Activated T-helper 2 cell treated with anti-CD3 and anti-CD28 coated beads, Interferon-gamma antibody, Interleukin-2, Interleukin-4, amounts not matched to agents 10 μg/mL and 5 μg/mL and 100 μg/mL, durations not matched to agents 14 hours and 24 hours and 36 hours (primary cell): ENCODE measurements at regions of chr3 and their contacts with region 1.

Region 1: GRCh38 chr3:72134989-72135451 is 350.1 kb upstream of the PROK2 start:
- DNase-seq: no peak
- H3K4me3 Mint-ChIP-seq: peak overlapping the region; percentile 31
- H3K27ac Mint-ChIP-seq: peak overlapping the region; percentile 77
- H3K4me1 Mint-ChIP-seq: peaks cover 29% of the 10 kb centered on the region
- H3K27me3 Mint-ChIP-seq: no peaks in the 10 kb centered on the region

Region 2: GRCh38 chr3:72100601-72101187 is 34.3 kb before region 1 on chr3:
- intact Hi-C with region 1: loop called (anchors 5 kb)
- DNase-seq: peak; percentile 87
- H3K4me3 Mint-ChIP-seq: peak overlapping the region; percentile 76
- H3K27ac Mint-ChIP-seq: peak overlapping the region; percentile 77
- H3K4me1 Mint-ChIP-seq: peaks cover 25% of the 10 kb centered on the region
- H3K27me3 Mint-ChIP-seq: peaks cover 14% of the 10 kb centered on the region

Region 3: GRCh38 chr3:72380193-72380592 is 245.2 kb after region 1 on chr3:
- intact Hi-C with region 1: no loop called
- DNase-seq: no peak
- H3K4me3 Mint-ChIP-seq: no peak overlapping the region
- H3K27ac Mint-ChIP-seq: no peak overlapping the region
- H3K4me1 Mint-ChIP-seq: peaks cover 83% of the 10 kb centered on the region
- H3K27me3 Mint-ChIP-seq: no peaks in the 10 kb centered on the region